Heart left ventricle (tissue), 16 donors: ENCODE measurements at regions of chr19 and their contacts with region 1.

Region 1: GRCh38 chr19:1020868-1021425 is at the start of gene TMEM259:
- DNase-seq: peak; percentile 98 to 99 (median 98)
- ATAC-seq: peak; percentile 90 to 92 (median 92)
- H3K4me3 ChIP-seq: peak within 1 kb of the TSS; percentile 72 to 96 (median 86)
- H3K27ac ChIP-seq: peak within 1 kb of the TSS; percentile 60 to 98 (median 96)
- H3K4me1 ChIP-seq: peaks cover 28 to 67% (median 58%) of the 10 kb centered on the region in 12 donors
- H3K27me3 ChIP-seq: peaks cover 0 to under 1% (median 0%) of the 10 kb centered on the region in 9 donors
- CTCF ChIP-seq: peak in 3 of 12 donors; percentile 9 to 21 (median 15)
- POLR2A ChIP-seq: peak in 1 of 2 donors; percentile 63
- total RNA-seq, gene TMEM259: 95.1 to 189 (median 112) TPM

Region 2: DNA sequence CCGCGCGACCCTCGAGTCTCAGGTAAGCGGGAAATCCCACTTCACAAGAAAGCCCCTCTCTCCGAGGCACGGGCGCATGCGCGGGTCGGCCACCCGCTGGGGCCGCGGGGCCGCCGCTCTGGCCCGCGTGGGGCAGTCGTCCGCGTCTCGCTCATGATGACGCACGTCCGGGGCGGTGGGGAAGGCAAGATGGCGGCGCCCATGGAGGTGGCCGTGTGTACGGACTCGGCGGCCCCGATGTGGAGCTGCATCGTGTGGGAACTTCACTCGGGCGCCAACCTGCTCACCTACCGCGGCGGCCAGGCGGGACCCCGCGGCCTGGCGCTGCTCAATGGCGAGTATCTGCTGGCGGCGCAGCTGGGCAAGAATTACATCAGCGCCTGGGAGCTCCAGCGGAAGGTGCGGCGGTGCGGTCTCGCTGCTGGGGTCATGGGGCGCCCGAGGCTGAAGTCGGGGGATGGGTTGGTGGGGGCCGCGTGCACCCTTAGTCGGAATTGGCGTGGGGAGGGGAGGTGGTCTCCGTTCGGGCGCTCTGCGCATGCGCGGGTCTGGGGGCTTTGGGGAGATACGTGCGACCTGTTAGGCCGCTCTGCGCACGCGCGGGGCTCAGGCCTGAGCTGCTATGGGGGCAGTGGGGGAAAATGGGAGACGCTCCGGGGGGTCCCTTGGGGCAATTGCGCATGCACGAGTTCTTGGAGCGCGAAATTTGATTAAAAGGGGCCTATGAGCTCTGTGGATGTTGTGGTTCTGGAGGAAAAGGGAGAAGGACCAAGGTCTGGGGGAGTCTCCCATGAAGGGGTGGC is 36.6 kb before region 1 on chr19 and contains the start of gene WDR18:
- intact Hi-C with region 1: loop called in 1 of 10 experiments (anchors 2 kb)
- DNase-seq: peak; percentile 94 to 97 (median 94)
- ATAC-seq: peak; percentile 87 to 97 (median 96)
- H3K4me3 ChIP-seq: peak within 1 kb of the TSS; percentile 80 to 100 (median 91)
- H3K27ac ChIP-seq: peak within 1 kb of the TSS; percentile 67 to 92 (median 86)
- H3K4me1 ChIP-seq: peaks cover 3 to 38% (median 19%) of the 10 kb centered on the region in 12 donors
- H3K27me3 ChIP-seq: no peaks in the 10 kb centered on the region
- CTCF ChIP-seq: peak in 8 of 12 donors; percentile 11 to 50 (median 34)
- POLR2A ChIP-seq: peak in 1 of 2 donors; percentile 57
- total RNA-seq, gene WDR18: 15.6 to 36.3 (median 19.2) TPM

Region 3: DNA sequence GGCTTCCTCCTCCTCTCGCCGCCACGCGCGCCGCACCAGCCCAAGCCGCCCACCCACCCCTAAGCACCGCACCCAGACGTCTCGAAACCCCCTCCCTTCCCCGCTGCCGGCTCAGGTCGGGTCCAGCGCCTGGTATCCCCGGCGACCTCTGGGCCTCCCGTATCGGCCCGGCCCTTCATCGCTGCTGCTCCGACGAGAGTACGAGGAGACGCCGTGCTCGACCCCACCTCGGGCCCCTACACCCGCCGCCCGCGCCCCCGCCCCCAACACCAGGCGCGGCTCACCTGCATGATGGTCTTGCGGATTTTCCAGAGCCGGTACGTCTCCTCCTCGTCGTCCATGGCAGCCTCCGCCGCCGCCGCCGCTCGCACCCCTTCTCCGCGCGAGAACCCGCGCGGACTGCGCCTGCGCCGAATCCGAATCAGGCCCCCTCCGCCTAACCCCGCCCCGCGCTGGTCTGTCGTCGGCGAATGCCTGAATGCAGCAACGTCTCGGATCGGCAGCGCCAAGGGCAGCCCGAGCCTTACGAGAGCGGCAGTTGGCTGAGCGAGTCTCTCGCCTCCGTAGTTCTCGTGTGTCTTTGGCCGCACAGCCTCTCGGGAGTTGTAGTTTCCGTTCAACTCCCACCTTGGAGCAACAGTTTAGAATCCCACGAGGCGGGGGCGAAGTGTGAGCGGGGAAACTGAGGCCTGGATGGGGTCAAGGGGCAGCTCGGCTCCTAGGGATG is 74.2 kb after region 1 on chr19 and contains the start of gene POLR2E:
- intact Hi-C with region 1: loop called in 8 of 10 experiments (anchors 5 kb)
- DNase-seq: peak; percentile 99 to 100 (median 99)
- ATAC-seq: peak; percentile 96 to 99 (median 98)
- H3K4me3 ChIP-seq: peak within 1 kb of the TSS; percentile 67 to 97 (median 88)
- H3K27ac ChIP-seq: peak within 1 kb of the TSS in 11 of 12 donors; percentile 65 to 88 (median 77)
- H3K4me1 ChIP-seq: peaks cover 5 to 49% (median 26%) of the 10 kb centered on the region in 12 donors
- H3K27me3 ChIP-seq: no peaks in the 10 kb centered on the region
- CTCF ChIP-seq: no peak
- POLR2A ChIP-seq: peak; percentile 35 to 88
- total RNA-seq, gene POLR2E: 116 to 220 (median 139) TPM

Region 4: GRCh38 chr19:1103708-1104310 is 82.9 kb after region 1 on chr19 and contains the start of gene GPX4:
- intact Hi-C with region 1: loop called in 7 of 10 experiments (anchors 5 kb)
- DNase-seq: peak; percentile 99 to 100 (median 100)
- ATAC-seq: peak; percentile 85 to 91 (median 90)
- H3K4me3 ChIP-seq: peak within 1 kb of the TSS; percentile 35 to 95 (median 76)
- H3K27ac ChIP-seq: peak within 1 kb of the TSS; percentile 79 to 100 (median 98)
- H3K4me1 ChIP-seq: peaks cover 0 to 74% (median 56%) of the 10 kb centered on the region in 12 donors
- H3K27me3 ChIP-seq: no peaks in the 10 kb centered on the region
- CTCF ChIP-seq: no peak
- POLR2A ChIP-seq: peak; percentile 40 to 96
- total RNA-seq, gene GPX4: 251 to 590 (median 289) TPM

Region 5: GRCh38 chr19:1161716-1162115 is 140.8 kb after region 1 on chr19:
- intact Hi-C with region 1: no loop called
- DNase-seq: peak in 1 of 5 donors; percentile 28
- ATAC-seq: no peak
- H3K4me3 ChIP-seq: no peak overlapping the region
- H3K27ac ChIP-seq: no peak overlapping the region
- H3K4me1 ChIP-seq: peaks cover 0 to 27% (median 7%) of the 10 kb centered on the region in 12 donors
- H3K27me3 ChIP-seq: no peaks in the 10 kb centered on the region
- CTCF ChIP-seq: no peak
- POLR2A ChIP-seq: no peak

Region 6: DNA sequence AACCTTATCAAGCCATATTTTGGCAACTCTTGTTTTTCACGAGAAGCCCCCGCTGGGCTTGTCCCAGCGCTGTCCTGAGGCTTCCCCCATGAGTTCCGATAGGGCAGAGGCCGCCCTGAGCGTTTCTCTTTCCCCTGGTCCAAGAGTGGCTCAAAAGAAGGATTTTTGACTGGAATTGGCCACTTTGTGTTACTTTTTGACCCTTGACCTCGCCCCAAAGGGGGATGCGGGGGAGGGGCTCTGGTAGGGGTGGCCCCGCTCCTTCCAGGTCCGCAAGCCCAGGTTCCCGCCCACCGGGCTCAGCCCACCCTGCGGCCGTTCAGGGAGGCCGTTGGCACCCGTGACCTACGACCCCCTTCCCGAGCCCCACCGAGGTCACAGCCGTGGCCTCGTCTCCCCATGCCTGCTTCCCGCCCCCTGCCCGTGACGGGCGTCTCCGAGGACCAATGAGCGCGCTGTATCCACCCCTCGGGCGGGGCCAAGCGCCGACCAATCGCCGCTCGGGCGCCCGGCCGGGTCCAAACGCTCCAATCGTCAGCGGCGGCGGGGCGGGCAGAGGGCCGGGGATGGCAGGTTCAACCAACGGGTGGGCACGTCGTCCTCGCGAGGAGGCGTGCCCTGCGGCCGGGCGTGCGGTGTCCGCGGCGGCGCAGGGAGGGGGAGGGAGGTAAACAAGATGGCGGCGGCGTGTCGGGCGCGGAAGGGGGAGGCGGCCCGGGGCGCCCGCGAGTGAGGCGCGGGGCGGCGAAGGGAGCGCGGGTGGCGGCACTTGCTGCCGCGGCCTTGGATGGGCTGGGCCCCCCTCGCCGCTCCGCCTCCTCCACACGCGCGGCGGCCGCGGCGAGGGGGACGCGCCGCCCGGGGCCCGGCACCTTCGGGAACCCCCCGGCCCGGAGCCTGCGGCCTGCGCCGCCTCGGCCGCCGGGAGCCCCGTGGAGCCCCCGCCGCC is 184.4 kb after region 1 on chr19 and contains the start of gene STK11:
- intact Hi-C with region 1: loop called in 1 of 10 experiments (anchors 5 kb)
- DNase-seq: peak; percentile 99 to 100 (median 100)
- ATAC-seq: peak; percentile 91 to 94 (median 92)
- H3K4me3 ChIP-seq: peak within 1 kb of the TSS; percentile 61 to 88 (median 78)
- H3K27ac ChIP-seq: peak within 1 kb of the TSS; percentile 41 to 96 (median 89)
- H3K4me1 ChIP-seq: peaks cover 0 to 62% (median 36%) of the 10 kb centered on the region in 12 donors
- H3K27me3 ChIP-seq: no peaks in the 10 kb centered on the region
- CTCF ChIP-seq: no peak
- POLR2A ChIP-seq: peak; percentile 22 to 77
- total RNA-seq, gene STK11: 44.7 to 92.0 (median 50.7) TPM

Region 7: GRCh38 chr19:1249298-1249989 is 228.5 kb after region 1 on chr19:
- intact Hi-C with region 1: no loop called
- DNase-seq: peak; percentile 92 to 96 (median 94)
- ATAC-seq: peak in 2 of 4 donors; percentile 5 to 6
- H3K4me3 ChIP-seq: peak overlapping the region; percentile 68 to 97 (median 85)
- H3K27ac ChIP-seq: peak overlapping the region; percentile 96 to 100 (median 100)
- H3K4me1 ChIP-seq: peaks cover 21 to 75% (median 57%) of the 10 kb centered on the region in 12 donors
- H3K27me3 ChIP-seq: no peaks in the 10 kb centered on the region
- CTCF ChIP-seq: no peak
- POLR2A ChIP-seq: peak; percentile 85 to 95

Region 8: GRCh38 chr19:1503089-1503933 is 482.4 kb after region 1 on chr19:
- intact Hi-C with region 1: no loop called
- DNase-seq: peak in 1 of 5 donors; percentile 62
- ATAC-seq: peak in 1 of 4 donors; percentile 7
- H3K4me3 ChIP-seq: peak overlapping the region in 7 of 12 donors; percentile 8 to 30 (median 22)
- H3K27ac ChIP-seq: no peak overlapping the region
- H3K4me1 ChIP-seq: peaks cover 0 to 31% (median 16%) of the 10 kb centered on the region in 12 donors
- H3K27me3 ChIP-seq: peaks cover 0 to 19% (median 8%) of the 10 kb centered on the region in 9 donors
- CTCF ChIP-seq: peak; percentile 62 to 85 (median 74)
- POLR2A ChIP-seq: no peak